B cell (primary cell): ENCODE measurements at regions of chr1 and their contacts with region 1.

Region 1: GRCh38 chr1:20521960-20522861 is 14.3 kb upstream of the MUL1 start:
- DNase-seq: peak; percentile 75
- ATAC-seq: peak; percentile 17
- H3K4me3 ChIP-seq: no peak overlapping the region
- H3K4me3 Mint-ChIP-seq: no peak overlapping the region
- H3K27ac ChIP-seq: no peak overlapping the region
- H3K27ac Mint-ChIP-seq: no peak overlapping the region
- H3K4me1 ChIP-seq: peaks cover 0 to 3% of the 10 kb centered on the region in 2 donors
- H3K4me1 Mint-ChIP-seq: no peaks in the 10 kb centered on the region
- H3K27me3 ChIP-seq: peaks cover 0 to 9% (median 0%) of the 10 kb centered on the region in 4 experiments
- H3K27me3 Mint-ChIP-seq: peaks cover 28% of the 10 kb centered on the region
- CTCF ChIP-seq: peak; percentile 87

Region 2: GRCh38 chr1:20322081-20322824 is 200.0 kb before region 1 on chr1:
- CTCF ChIA-PET with region 1: no interaction called
- POLR2A ChIA-PET with region 1: no interaction called
- intact Hi-C with region 1: no loop called
- DNase-seq: no peak
- ATAC-seq: no peak
- H3K4me3 ChIP-seq: no peak overlapping the region
- H3K4me3 Mint-ChIP-seq: no peak overlapping the region
- H3K27ac ChIP-seq: no peak overlapping the region
- H3K27ac Mint-ChIP-seq: no peak overlapping the region
- H3K4me1 ChIP-seq: peaks cover 5 to 8% of the 10 kb centered on the region in 2 donors
- H3K4me1 Mint-ChIP-seq: peaks cover 8% of the 10 kb centered on the region
- H3K27me3 ChIP-seq: peaks cover 0 to 18% (median under 1%) of the 10 kb centered on the region in 4 experiments
- H3K27me3 Mint-ChIP-seq: peaks cover 29% of the 10 kb centered on the region
- CTCF ChIP-seq: no peak

Region 3: DNA sequence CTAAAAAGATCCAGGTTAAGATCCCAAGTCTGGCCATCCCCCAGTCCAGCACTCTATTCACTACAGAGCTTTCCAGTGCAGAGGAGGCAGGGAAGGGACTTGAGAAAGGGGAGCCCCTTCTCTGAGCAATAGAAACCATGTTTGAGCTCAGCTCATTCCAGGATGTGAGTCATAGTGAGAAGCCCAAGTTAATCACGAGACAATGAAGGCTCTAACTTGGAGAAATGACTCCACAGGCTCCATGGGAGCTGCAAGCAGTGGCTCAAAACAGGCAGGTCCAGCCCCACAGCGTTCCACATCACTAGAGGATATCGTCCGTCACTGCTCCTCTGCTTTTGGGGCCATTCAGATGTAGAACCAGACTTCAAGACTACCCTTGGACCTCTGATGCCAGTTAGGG is 95.3 kb before region 1 on chr1:
- CTCF ChIA-PET with region 1: no interaction called
- POLR2A ChIA-PET with region 1: no interaction called
- intact Hi-C with region 1: no loop called
- DNase-seq: no peak
- ATAC-seq: no peak
- H3K4me3 ChIP-seq: no peak overlapping the region
- H3K4me3 Mint-ChIP-seq: no peak overlapping the region
- H3K27ac ChIP-seq: no peak overlapping the region
- H3K27ac Mint-ChIP-seq: no peak overlapping the region
- H3K4me1 ChIP-seq: no peaks in the 10 kb centered on the region
- H3K4me1 Mint-ChIP-seq: peaks cover 3% of the 10 kb centered on the region
- H3K27me3 ChIP-seq: peaks cover 0 to 7% (median 0%) of the 10 kb centered on the region in 4 experiments
- H3K27me3 Mint-ChIP-seq: peaks cover 25% of the 10 kb centered on the region
- CTCF ChIP-seq: no peak

Region 4: GRCh38 chr1:20640183-20640597 is 118.0 kb after region 1 on chr1:
- CTCF ChIA-PET with region 1: interaction called, 27 read pairs
- POLR2A ChIA-PET with region 1: interaction called, 3 read pairs
- intact Hi-C with region 1: loop called (anchors 1 kb)
- DNase-seq: peak; percentile 74
- ATAC-seq: peak; percentile 74
- H3K4me3 ChIP-seq: no peak overlapping the region
- H3K4me3 Mint-ChIP-seq: no peak overlapping the region
- H3K27ac ChIP-seq: no peak overlapping the region
- H3K27ac Mint-ChIP-seq: no peak overlapping the region
- H3K4me1 ChIP-seq: no peaks in the 10 kb centered on the region
- H3K4me1 Mint-ChIP-seq: no peaks in the 10 kb centered on the region
- H3K27me3 ChIP-seq: no peaks in the 10 kb centered on the region
- H3K27me3 Mint-ChIP-seq: no peaks in the 10 kb centered on the region
- CTCF ChIP-seq: peak; percentile 92